GM10248 (cell line): ENCODE measurements at regions of chr2 and their contacts with region 1.

Region 1: GRCh38 chr2:231056453-231057424 is at the start of gene PSMD1:
- DNase-seq: peak; percentile 94
- CTCF ChIP-seq: peak; percentile 95

Region 2: DNA sequence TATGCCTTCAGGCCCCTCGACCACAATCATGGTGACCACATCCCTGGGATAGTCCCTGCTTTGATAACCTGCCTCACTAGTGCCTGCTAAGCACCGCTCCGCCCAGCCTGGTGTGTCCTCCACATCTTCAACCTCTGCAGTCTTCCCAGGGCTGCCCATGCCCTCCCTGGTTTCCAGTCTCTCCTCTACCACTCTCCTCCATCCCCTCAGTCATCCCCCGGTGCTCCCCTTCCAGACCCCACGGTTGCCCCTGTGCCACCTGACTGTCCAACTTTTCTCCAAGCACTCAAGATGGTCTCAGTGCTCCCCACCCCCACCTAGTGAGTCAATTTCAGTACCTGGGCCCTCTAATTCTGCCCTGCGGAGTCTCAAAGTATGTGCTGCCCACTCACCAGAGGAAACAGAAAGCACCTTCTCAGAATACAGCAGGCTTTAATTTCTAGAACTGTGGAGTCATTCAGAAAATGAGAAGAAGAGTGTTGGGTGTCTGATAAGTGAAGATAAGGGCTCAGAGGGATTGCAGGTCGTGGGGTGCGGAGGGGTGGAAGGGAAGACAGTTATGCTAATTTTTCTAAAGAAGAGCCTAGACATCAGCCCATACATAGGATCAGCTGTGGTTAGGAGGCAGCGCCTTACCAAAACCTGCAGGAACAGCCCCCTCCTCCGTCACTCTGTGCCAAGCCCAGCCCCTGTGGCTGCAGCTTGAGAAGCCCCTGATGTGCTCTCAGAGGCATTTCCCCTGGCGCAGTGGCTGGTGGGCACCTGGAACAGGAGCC is 397.7 kb before region 1 on chr2:
- CTCF ChIA-PET with region 1: no interaction called
- POLR2A ChIA-PET with region 1: no interaction called
- DNase-seq: peak; percentile 77
- CTCF ChIP-seq: no peak

Region 3: GRCh38 chr2:230847883-230848388 is 208.8 kb before region 1 on chr2:
- CTCF ChIA-PET with region 1: interaction called, 22 read pairs
- POLR2A ChIA-PET with region 1: no interaction called
- DNase-seq: peak; percentile 92
- CTCF ChIP-seq: peak; percentile 91

Region 4: DNA sequence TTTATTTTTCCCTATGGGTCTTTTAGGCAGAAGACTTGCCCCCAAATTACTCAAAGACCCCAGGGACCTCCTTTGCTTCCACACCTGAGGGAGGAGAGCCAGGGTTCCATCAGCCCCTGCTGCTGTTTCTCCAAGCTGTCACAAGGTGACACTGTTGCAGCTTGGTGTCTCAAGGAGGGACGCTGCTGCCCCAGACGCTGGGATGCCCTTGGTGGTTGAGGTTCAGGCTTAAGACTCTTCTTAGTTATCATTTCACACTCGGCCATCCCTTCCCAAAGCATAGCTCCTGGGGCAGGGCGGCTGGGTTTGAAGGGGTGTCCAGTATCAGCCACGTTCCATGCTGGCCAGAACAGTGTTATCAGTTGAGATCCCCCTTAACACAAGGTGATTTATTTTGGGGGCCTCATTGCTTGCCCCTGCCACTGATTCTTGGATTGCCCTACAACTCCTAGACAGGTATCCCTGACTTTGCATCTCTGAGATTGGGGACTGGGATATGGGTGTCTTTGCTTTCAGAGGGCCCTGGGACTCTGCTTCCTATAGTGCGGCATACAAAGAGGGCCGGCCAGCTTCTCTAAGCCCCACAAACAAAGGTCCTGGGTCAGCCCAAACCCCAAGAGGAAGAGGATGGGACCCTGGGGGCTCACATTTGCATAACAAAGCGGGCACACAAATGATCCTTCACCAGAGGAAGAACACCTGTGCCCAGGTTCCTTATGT is 154.4 kb before region 1 on chr2:
- CTCF ChIA-PET with region 1: interaction called, 22 read pairs
- POLR2A ChIA-PET with region 1: no interaction called
- DNase-seq: peak; percentile 77
- CTCF ChIP-seq: peak; percentile 97

Region 5: GRCh38 chr2:230968921-230969658 is 87.6 kb before region 1 on chr2:
- CTCF ChIA-PET with region 1: interaction called, 10 read pairs
- POLR2A ChIA-PET with region 1: no interaction called
- DNase-seq: no peak
- CTCF ChIP-seq: no peak

Region 6: GRCh38 chr2:231029563-231029962 is 27.2 kb before region 1 on chr2:
- CTCF ChIA-PET with region 1: interaction called, 13 read pairs
- POLR2A ChIA-PET with region 1: no interaction called
- DNase-seq: no peak
- CTCF ChIP-seq: no peak

Region 7: GRCh38 chr2:231068525-231069222 is 11.9 kb after region 1 on chr2:
- CTCF ChIA-PET with region 1: interaction called, 18 read pairs
- POLR2A ChIA-PET with region 1: no interaction called
- DNase-seq: no peak
- CTCF ChIP-seq: no peak